CD4-positive, alpha-beta memory T cell (primary cell): ENCODE measurements at regions of chr7 and their contacts with region 1.

Region 1: GRCh38 chr7:100132697-100133151 is 6.0 kb downstream of the MBLAC1 start:
- DNase-seq: peak; percentile 60 to 71 (median 65)
- H3K4me3 ChIP-seq: no peak overlapping the region
- H3K4me3 Mint-ChIP-seq: peak overlapping the region in 2 of 8 donors; percentile 39 to 52
- H3K27ac ChIP-seq: no peak overlapping the region
- H3K27ac Mint-ChIP-seq: peak overlapping the region in 5 of 7 donors; percentile 36 to 77 (median 48)
- H3K4me1 ChIP-seq: peaks cover 24% of the 10 kb centered on the region
- H3K4me1 Mint-ChIP-seq: peaks cover 5 to 20% (median 13%) of the 10 kb centered on the region in 4 donors
- H3K27me3 ChIP-seq: no peaks in the 10 kb centered on the region
- H3K27me3 Mint-ChIP-seq: peaks cover 0 to 1% of the 10 kb centered on the region in 2 donors

Region 2: GRCh38 chr7:100081535-100082102 is 51.1 kb before region 1 on chr7 and contains the start of gene ZNF3:
- CTCF ChIA-PET with region 1: interaction called, 13 read pairs
- POLR2A ChIA-PET with region 1: no interaction called
- intact Hi-C with region 1: loop called (anchors 1 kb)
- DNase-seq: peak; percentile 98 to 99 (median 98)
- H3K4me3 ChIP-seq: peak within 1 kb of the TSS; percentile 87 to 88
- H3K4me3 Mint-ChIP-seq: peak within 1 kb of the TSS; percentile 85 to 97 (median 94)
- H3K27ac ChIP-seq: peak within 1 kb of the TSS; percentile 74
- H3K27ac Mint-ChIP-seq: peak within 1 kb of the TSS; percentile 90 to 99 (median 95)
- H3K4me1 ChIP-seq: peaks cover 25% of the 10 kb centered on the region
- H3K4me1 Mint-ChIP-seq: peaks cover 23 to 48% (median 36%) of the 10 kb centered on the region in 4 donors
- H3K27me3 ChIP-seq: no peaks in the 10 kb centered on the region
- H3K27me3 Mint-ChIP-seq: no peaks in the 10 kb centered on the region
- total RNA-seq, gene ZNF3: 44.2 to 44.8 TPM

Region 3: DNA sequence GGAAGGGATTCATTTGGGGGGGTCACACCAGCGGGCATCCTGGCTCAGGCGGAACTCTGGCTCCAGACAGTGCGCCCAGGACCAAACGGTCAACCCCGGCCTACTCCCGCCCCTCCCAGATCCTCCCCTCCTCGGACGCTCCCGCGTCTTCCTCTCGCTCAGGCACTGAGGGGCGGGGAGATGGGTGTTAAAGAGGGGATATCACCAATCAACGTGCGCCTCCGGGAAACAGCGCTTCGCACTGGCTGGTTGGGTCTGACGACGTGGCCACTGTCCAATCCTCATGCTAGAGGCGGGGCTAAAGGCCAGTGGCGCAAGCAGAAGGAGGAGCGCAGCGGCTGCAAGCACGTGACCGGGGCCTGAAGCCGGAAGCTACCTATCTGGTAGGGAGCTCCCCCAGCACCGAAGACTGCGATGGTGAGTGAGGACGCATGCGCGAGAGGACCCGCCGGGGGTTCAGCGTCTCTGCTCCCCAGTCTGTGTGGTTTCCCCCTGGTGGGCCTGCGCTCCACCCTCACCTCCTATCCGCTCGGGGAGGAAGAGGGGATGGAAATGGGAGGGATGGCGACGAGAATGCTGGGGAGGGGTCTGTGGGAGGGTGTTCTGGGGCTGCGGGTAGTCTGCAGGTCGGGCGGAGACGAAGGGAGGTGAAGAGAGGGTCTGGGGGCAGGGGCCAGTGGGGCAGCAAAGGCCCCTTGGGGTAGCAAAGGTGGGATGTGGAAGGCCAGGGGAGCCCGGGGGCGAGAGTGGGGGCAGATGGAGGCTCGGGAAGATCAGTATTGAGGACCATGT is 16.0 kb after region 1 on chr7 and contains the start of gene LAMTOR4:
- CTCF ChIA-PET with region 1: interaction called, 25 read pairs
- POLR2A ChIA-PET with region 1: interaction called, 9 read pairs
- intact Hi-C with region 1: no loop called
- DNase-seq: peak; percentile 94 to 99 (median 99)
- H3K4me3 ChIP-seq: peak within 1 kb of the TSS; percentile 83 to 93
- H3K4me3 Mint-ChIP-seq: peak within 1 kb of the TSS; percentile 88 to 99 (median 94)
- H3K27ac ChIP-seq: peak within 1 kb of the TSS; percentile 92
- H3K27ac Mint-ChIP-seq: peak within 1 kb of the TSS; percentile 95 to 99 (median 97)
- H3K4me1 ChIP-seq: peaks cover 45% of the 10 kb centered on the region
- H3K4me1 Mint-ChIP-seq: peaks cover 18 to 45% (median 31%) of the 10 kb centered on the region in 4 donors
- H3K27me3 ChIP-seq: no peaks in the 10 kb centered on the region
- H3K27me3 Mint-ChIP-seq: no peaks in the 10 kb centered on the region
- total RNA-seq, gene LAMTOR4: 178 to 189 TPM

Region 4: DNA sequence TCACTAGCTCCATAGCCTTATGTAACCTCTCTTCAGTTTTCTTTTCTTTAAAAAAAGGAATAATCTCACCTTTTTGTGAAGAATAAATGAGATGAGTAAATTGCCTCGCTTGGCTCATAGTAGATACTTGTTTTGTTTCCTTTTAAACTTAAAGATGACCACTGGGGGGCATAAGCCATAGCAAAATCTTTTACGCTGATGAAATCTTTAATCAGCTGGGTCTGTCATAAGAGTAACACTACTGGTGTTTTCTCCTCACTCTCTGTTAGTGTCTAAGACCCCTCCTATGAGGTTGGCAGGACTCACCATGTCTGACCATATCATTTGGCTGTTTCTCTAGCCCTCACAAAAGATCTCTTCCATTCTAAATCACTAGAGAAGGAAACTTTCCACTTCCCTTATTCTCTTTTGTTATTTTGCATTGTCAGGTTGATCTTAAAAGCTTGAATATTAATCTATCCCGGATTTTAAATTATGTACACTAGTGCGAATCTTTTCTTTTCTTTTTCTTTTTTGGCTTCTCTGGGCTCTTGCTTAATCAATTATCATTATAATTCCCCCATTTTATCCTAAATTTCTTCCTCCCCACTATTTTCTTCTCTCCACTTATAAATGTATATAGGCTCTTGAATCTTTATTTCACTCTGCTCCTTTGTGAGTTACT is 57.5 kb after region 1 on chr7:
- CTCF ChIA-PET with region 1: interaction called, 30 read pairs
- POLR2A ChIA-PET with region 1: interaction called, 5 read pairs
- intact Hi-C with region 1: loop called (anchors 2 kb)
- DNase-seq: peak in 4 of 5 donors; percentile 48 to 59 (median 57)
- H3K4me3 ChIP-seq: no peak overlapping the region
- H3K4me3 Mint-ChIP-seq: no peak overlapping the region
- H3K27ac ChIP-seq: no peak overlapping the region
- H3K27ac Mint-ChIP-seq: peak overlapping the region in 6 of 7 donors; percentile 0 to 69 (median 30)
- H3K4me1 ChIP-seq: no peaks in the 10 kb centered on the region
- H3K4me1 Mint-ChIP-seq: peaks cover 3 to 6% (median 5%) of the 10 kb centered on the region in 4 donors
- H3K27me3 ChIP-seq: no peaks in the 10 kb centered on the region
- H3K27me3 Mint-ChIP-seq: no peaks in the 10 kb centered on the region

Region 5: GRCh38 chr7:100271716-100272537 is 139.2 kb after region 1 on chr7:
- CTCF ChIA-PET with region 1: interaction called, 3 read pairs
- POLR2A ChIA-PET with region 1: interaction called, 3 read pairs
- intact Hi-C with region 1: loop called (anchors 2 kb)
- DNase-seq: peak; percentile 97 to 99 (median 98)
- H3K4me3 ChIP-seq: peak overlapping the region in 1 of 2 donors; percentile 53
- H3K4me3 Mint-ChIP-seq: peak overlapping the region; percentile 76 to 88 (median 82)
- H3K27ac ChIP-seq: peak overlapping the region; percentile 55
- H3K27ac Mint-ChIP-seq: peak overlapping the region in 6 of 7 donors; percentile 21 to 88 (median 64)
- H3K4me1 ChIP-seq: peaks cover 5% of the 10 kb centered on the region
- H3K4me1 Mint-ChIP-seq: peaks cover 5 to 14% (median 10%) of the 10 kb centered on the region in 4 donors
- H3K27me3 ChIP-seq: no peaks in the 10 kb centered on the region
- H3K27me3 Mint-ChIP-seq: no peaks in the 10 kb centered on the region